Activated CD4-positive, alpha-beta memory T cell treated with anti-CD3 and anti-CD28 coated beads, Interleukin-2, amount 10 ng/mL, durations not matched to agents 7 days and 5 days (primary cell): ENCODE measurements at regions of chr10 and their contacts with region 1.

Region 1: GRCh38 chr10:26860443-26861204 is at the start of gene ABI1:
- DNase-seq: peak; percentile 98
- H3K4me3 Mint-ChIP-seq: peak within 1 kb of the TSS; percentile 100
- H3K27ac Mint-ChIP-seq: peak within 1 kb of the TSS; percentile 100
- H3K4me1 Mint-ChIP-seq: peaks cover 30% of the 10 kb centered on the region
- H3K27me3 Mint-ChIP-seq: peaks cover 11% of the 10 kb centered on the region
- total RNA-seq, gene ABI1: 76.9 to 78.4 TPM

Region 2: DNA sequence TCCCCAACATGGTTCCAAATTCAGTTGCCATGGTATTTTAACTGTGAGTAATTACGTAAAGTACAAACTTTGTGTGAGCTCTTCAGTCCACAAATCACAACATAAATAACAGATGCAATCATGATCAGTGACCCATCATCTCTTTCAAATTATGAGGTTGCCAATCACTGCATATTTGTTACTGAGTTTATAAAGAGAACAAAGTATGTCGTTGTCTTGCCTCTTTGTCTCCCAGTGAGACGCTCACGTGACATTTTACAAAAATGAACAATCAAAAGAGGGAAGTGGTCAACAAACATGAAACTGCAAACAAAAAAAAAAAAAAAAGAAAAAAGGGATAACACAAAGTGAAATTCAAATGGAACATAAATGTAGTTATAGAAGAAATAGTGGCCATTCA is 285.8 kb before region 1 on chr10:
- CTCF ChIA-PET with region 1: no interaction called
- POLR2A ChIA-PET with region 1: no interaction called
- DNase-seq: no peak
- H3K4me3 Mint-ChIP-seq: no peak overlapping the region
- H3K27ac Mint-ChIP-seq: no peak overlapping the region
- H3K4me1 Mint-ChIP-seq: peaks cover 4% of the 10 kb centered on the region
- H3K27me3 Mint-ChIP-seq: no peaks in the 10 kb centered on the region

Region 3: DNA sequence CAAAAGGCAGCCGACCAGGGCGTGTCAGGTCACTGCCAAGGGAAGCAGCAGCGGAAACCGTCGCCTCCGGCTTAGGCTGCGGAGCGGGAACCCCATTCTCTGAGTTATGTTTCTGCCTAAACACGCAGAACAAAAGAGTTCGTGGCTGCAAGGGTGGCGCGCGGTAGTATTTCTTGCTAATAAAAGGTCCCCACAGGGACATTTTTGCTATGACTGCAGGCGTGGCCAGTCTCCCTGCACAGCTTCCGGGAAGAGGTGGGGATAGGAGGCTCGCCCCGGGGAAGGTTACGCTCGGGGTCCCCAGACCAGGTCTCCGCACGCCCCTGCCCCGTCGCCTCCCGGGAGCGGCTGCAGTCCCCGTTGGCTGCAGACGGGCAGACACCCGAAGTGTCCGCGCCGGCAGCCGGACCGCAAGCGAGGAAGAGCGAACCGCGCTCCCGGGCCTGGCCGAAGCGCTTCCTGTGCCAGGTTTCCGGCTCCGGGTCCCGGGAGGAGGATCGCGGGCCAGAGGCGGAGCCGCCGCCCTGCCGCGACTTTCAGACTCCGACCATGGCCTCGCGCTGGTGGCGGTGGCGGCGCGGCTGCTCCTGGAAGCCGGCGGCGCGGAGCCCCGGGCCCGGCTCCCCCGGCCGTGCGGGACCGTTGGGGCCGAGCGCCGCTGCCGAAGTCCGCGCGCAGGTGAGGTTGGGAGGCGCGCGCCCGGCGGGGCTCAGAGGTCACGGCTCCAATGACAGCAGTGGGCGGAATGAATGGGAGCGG is 163.3 kb before region 1 on chr10 and contains the start of gene PDSS1:
- CTCF ChIA-PET with region 1: interaction called, 3 read pairs
- POLR2A ChIA-PET with region 1: interaction called, 18 read pairs
- DNase-seq: peak; percentile 71
- H3K4me3 Mint-ChIP-seq: peak within 1 kb of the TSS; percentile 95
- H3K27ac Mint-ChIP-seq: peak within 1 kb of the TSS; percentile 94
- H3K4me1 Mint-ChIP-seq: peaks cover 37% of the 10 kb centered on the region
- H3K27me3 Mint-ChIP-seq: no peaks in the 10 kb centered on the region
- total RNA-seq, gene PDSS1: 10.7 to 12.9 TPM

Region 4: DNA sequence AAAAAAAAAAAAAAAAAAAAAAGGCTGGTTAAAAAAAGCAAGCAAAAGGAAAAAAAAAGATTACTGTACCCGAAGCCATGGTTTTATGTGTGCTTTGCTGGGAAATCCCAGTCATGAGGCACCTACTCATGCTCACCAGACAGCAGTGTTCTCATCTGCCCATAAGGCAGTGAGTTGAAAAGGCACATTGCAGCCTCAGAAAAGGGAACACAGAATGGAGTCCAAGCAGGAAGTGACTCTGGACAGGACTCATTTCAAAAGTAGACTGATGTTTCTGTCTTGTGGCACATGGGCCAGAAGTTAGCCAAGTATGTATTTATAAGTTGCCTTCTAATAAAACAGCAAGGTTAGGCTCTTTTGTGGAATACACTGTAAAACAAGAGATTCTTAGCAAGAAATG is 122.9 kb before region 1 on chr10:
- CTCF ChIA-PET with region 1: interaction called, 4 read pairs
- POLR2A ChIA-PET with region 1: interaction called, 22 read pairs
- DNase-seq: peak; percentile 60
- H3K4me3 Mint-ChIP-seq: no peak overlapping the region
- H3K27ac Mint-ChIP-seq: peak overlapping the region; percentile 90
- H3K4me1 Mint-ChIP-seq: peaks cover 67% of the 10 kb centered on the region
- H3K27me3 Mint-ChIP-seq: no peaks in the 10 kb centered on the region

Region 5: GRCh38 chr10:26881600-26882331 is 21.1 kb after region 1 on chr10:
- CTCF ChIA-PET with region 1: interaction called, 30 read pairs
- POLR2A ChIA-PET with region 1: no interaction called
- DNase-seq: no peak
- H3K4me3 Mint-ChIP-seq: no peak overlapping the region
- H3K27ac Mint-ChIP-seq: no peak overlapping the region
- H3K4me1 Mint-ChIP-seq: peaks cover 7% of the 10 kb centered on the region
- H3K27me3 Mint-ChIP-seq: peaks cover 30% of the 10 kb centered on the region